ENCODE measurements at regions of chr1 and their contacts with region 1.

Region 1: DNA sequence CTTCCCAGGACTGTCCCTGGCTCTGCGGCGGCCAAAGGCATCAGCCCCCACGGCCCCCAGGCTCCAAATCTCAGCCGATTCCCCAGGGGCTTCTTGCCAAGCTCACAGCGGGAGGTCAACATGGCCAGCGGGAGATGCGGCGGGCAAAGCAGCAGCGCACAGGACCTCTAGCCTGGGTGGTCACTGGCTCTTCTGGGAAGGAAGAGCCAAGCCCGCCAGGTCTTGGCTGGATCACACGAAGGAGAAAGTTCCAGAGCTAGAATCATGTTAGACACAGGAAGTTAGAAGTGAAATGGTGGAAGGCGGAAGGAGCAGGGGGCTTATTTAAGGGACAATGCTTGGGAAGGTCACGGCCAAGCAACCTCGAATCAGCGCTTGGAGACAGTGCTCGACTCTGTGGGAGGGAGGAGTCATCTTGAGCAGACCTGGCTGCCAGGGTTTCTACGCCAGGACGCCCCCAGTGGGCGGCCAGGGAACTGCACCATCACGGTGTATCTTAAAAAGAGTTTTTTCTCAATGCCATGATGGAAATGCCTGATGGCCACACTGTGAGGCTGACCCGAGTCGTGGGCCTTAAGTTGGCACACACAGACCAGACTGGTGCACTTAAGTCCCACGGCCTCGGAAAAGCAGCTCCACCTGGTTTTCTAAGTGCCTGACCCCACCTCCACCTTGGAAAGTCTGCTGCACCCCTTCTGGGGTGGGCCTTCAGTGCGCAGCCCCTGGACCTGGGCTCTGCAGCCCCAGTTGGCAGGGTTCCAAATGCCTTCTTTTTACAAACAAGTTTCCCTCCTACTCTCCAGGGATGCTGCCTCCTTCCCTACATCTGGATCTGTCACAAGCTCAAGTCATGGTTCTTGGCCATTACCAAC is 29.3 kb downstream of the SLC66A1 start:
- DNase-seq: peak; percentile 56 to 79 (median 69)
- ATAC-seq: peak; percentile 90
- H3K4me3 ChIP-seq: no peak overlapping the region
- H3K4me3 Mint-ChIP-seq: no peak overlapping the region
- H3K27ac ChIP-seq: peak overlapping the region; percentile 31
- H3K27ac Mint-ChIP-seq: peak overlapping the region in 8 of 9 donors; percentile 5 to 93 (median 73)
- H3K4me1 ChIP-seq: no peaks in the 10 kb centered on the region
- H3K4me1 Mint-ChIP-seq: peaks cover 0 to 12% (median 7%) of the 10 kb centered on the region in 7 donors
- H3K27me3 ChIP-seq: no peaks in the 10 kb centered on the region
- H3K27me3 Mint-ChIP-seq: no peaks in the 10 kb centered on the region

Region 2: GRCh38 chr1:19220991-19221390 is 120.4 kb before region 1 on chr1:
- CTCF ChIA-PET with region 1: no interaction called
- POLR2A ChIA-PET with region 1: no interaction called
- intact Hi-C with region 1: no loop called
- DNase-seq: no peak
- ATAC-seq: no peak
- H3K4me3 ChIP-seq: no peak overlapping the region
- H3K4me3 Mint-ChIP-seq: no peak overlapping the region
- H3K27ac ChIP-seq: no peak overlapping the region
- H3K27ac Mint-ChIP-seq: peak overlapping the region in 1 of 9 donors; percentile 39
- H3K4me1 ChIP-seq: no peaks in the 10 kb centered on the region
- H3K4me1 Mint-ChIP-seq: peaks cover 4 to 18% (median 8%) of the 10 kb centered on the region in 7 donors
- H3K27me3 ChIP-seq: no peaks in the 10 kb centered on the region
- H3K27me3 Mint-ChIP-seq: no peaks in the 10 kb centered on the region

Region 3: DNA sequence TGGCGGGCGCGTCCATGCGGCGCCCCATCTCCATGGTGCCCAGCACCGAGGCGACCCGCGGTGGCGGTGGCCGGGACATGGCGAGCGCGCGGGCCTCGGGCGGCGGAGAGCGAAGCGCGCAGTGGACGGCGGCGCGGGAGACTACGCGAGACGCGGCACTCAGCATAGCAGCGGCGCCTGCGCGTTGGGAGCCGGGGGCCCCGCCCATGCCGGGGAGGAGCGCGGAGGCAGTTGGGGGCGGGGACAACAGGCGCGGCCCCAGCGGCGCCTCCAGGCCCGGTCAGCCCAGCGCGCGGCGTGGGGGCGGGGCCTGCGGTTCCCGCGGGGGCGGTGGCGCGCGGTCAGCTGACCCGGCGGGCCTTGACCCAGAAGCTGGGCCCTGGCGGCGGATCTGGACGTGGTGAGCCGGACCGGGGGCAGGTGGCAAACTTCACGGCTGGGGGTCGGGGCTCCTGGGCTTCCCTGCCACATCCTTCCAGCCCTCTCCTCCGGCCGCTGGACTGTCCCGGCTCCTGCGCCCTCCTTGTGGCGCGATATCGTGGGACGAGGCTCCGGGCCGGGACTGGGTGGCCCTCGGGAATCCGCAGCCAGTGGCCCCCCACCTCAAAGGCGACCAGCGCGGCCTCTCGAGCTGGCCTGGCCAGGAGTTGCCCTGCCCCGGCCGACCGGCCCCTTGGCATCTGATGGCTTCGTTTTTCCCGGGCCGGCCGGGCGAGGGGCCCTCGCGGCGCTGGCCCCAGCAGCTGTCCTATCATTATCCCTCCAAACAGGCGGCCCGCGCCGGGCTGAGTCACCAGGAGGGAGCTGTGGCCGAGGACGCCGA is 29.3 kb before region 1 on chr1 and contains the starts of genes AKR7A2 and SLC66A1:
- CTCF ChIA-PET with region 1: no interaction called
- POLR2A ChIA-PET with region 1: no interaction called
- intact Hi-C with region 1: loop called in 1 of 2 experiments (anchors 2 kb)
- DNase-seq: peak; percentile 68 to 97 (median 91)
- ATAC-seq: peak; percentile 98
- H3K4me3 ChIP-seq: peak within 1 kb of the TSS; percentile 76
- H3K4me3 Mint-ChIP-seq: peak within 1 kb of the TSS; percentile 86 to 94 (median 91)
- H3K27ac ChIP-seq: peak within 1 kb of the TSS; percentile 85
- H3K27ac Mint-ChIP-seq: peak within 1 kb of the TSS; percentile 33 to 83 (median 80)
- H3K4me1 ChIP-seq: peaks cover 16 to 17% of the 10 kb centered on the region in 2 donors
- H3K4me1 Mint-ChIP-seq: peaks cover 29 to 49% (median 44%) of the 10 kb centered on the region in 7 donors
- H3K27me3 ChIP-seq: no peaks in the 10 kb centered on the region
- H3K27me3 Mint-ChIP-seq: no peaks in the 10 kb centered on the region
- total RNA-seq, gene AKR7A2: 15.7 to 33.9 (median 25.2) TPM
- total RNA-seq, gene SLC66A1: 3.8 to 8.4 (median 7.2) TPM

Region 4: GRCh38 chr1:19582302-19582701 is 240.9 kb after region 1 on chr1:
- CTCF ChIA-PET with region 1: interaction called, 4 read pairs
- POLR2A ChIA-PET with region 1: no interaction called
- intact Hi-C with region 1: loop called (anchors 1 kb)
- DNase-seq: peak; percentile 37 to 72 (median 59)
- ATAC-seq: peak; percentile 94
- H3K4me3 ChIP-seq: no peak overlapping the region
- H3K4me3 Mint-ChIP-seq: no peak overlapping the region
- H3K27ac ChIP-seq: no peak overlapping the region
- H3K27ac Mint-ChIP-seq: peak overlapping the region in 2 of 9 donors; percentile 15 to 76
- H3K4me1 ChIP-seq: no peaks in the 10 kb centered on the region
- H3K4me1 Mint-ChIP-seq: peaks cover 5 to 15% (median 12%) of the 10 kb centered on the region in 7 donors
- H3K27me3 ChIP-seq: no peaks in the 10 kb centered on the region
- H3K27me3 Mint-ChIP-seq: peaks cover 0 to 8% (median 0%) of the 10 kb centered on the region in 5 donors

Measured in naive thymus-derived CD4-positive, alpha-beta T cell (primary cell).